Aorta (tissue), 5 donors: ENCODE measurements at regions of chr9 and their contacts with region 1.

Region 1: DNA sequence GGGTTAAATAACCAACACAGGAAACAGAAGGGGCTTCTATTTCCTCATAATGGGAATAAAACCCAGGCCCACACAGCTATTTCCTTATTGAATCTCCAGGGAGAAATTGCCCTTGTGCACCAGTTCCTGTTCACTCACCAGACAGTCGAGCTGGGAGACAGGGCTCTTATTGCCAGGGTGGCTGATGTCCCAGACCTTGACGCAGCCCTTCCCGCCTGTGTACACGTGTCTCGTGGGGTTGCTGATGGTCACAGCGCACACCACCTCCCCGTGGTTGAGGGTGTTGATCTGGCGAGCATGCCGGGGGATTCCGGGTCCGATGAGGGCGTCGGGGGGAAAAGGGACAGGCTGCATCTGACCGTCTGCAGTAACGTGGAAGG is 96.5 kb downstream of the TLE1 start:
- DNase-seq: peak; percentile 84 to 86
- ATAC-seq: peak; percentile 75
- H3K4me3 ChIP-seq: no peak overlapping the region
- H3K27ac ChIP-seq: peak overlapping the region in 1 of 2 donors; percentile 19
- H3K4me1 ChIP-seq: peaks cover 0 to 13% of the 10 kb centered on the region in 2 donors
- H3K27me3 ChIP-seq: no peaks in the 10 kb centered on the region

Region 2: GRCh38 chr9:81499021-81499454 is 93.8 kb before region 1 on chr9:
- intact Hi-C with region 1: loop called in 1 of 2 experiments (anchors 5 kb)
- DNase-seq: peak in 1 of 2 donors; percentile 55
- ATAC-seq: peak; percentile 71
- H3K4me3 ChIP-seq: no peak overlapping the region
- H3K27ac ChIP-seq: peak overlapping the region; percentile 82 to 92
- H3K4me1 ChIP-seq: peaks cover 4 to 15% of the 10 kb centered on the region in 2 donors
- H3K27me3 ChIP-seq: no peaks in the 10 kb centered on the region

Region 3: DNA sequence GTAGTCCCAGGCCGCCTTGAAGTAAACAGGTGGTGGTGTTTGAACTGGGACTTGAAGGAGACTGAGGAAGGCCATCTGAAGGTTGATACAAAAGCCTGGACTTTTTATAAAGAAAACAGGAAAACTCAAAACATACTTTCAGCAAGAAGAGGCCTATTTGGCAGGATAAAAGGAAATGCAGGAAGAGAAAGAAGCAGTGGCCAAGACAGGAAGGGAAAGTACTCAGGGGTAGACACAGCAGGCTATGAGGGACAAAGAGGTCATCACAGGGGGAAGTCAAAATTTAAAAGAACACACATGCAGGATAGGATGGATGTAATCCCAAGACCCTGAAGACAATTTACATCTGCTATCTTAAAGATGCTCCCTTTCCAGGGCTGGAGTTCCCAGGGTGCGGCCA is 83.5 kb after region 1 on chr9:
- intact Hi-C with region 1: no loop called
- DNase-seq: no peak
- ATAC-seq: no peak
- H3K4me3 ChIP-seq: no peak overlapping the region
- H3K27ac ChIP-seq: no peak overlapping the region
- H3K4me1 ChIP-seq: peaks cover 2% of the 10 kb centered on the region in 2 donors
- H3K27me3 ChIP-seq: no peaks in the 10 kb centered on the region

Region 4: DNA sequence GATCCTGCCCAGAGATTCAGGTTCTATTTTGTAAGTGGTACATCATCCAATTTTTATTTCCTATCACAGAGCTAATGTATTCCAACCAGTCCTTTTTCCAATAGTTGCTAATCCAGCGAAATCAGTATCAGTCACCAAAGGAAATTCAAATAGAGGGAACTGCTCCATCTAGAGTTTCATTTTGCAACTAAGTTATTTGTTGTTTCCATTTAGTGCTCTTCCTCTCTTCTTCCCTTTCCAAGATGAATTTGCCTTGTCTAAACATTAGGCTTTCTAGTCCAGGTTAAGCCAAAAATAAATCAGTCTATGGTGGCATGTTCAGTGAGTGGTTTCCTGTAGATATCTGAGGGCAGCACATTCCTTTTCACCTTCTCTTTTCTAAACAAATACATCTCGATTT is 255.6 kb after region 1 on chr9:
- intact Hi-C with region 1: loop called in 1 of 2 experiments (anchors 10 kb)
- DNase-seq: no peak
- ATAC-seq: peak; percentile 58
- H3K4me3 ChIP-seq: no peak overlapping the region
- H3K27ac ChIP-seq: no peak overlapping the region
- H3K4me1 ChIP-seq: no peaks in the 10 kb centered on the region
- H3K27me3 ChIP-seq: no peaks in the 10 kb centered on the region